Esophagus muscularis mucosa (tissue), 4 donors: ENCODE measurements at regions of chr6 and their contacts with region 1.

Region 1: GRCh38 chr6:132199343-132199742 is 201.9 kb downstream of the MOXD1 start:
- DNase-seq: no peak
- H3K4me3 ChIP-seq: no peak overlapping the region
- H3K27ac ChIP-seq: peak overlapping the region in 1 of 4 donors; percentile 4
- H3K4me1 ChIP-seq: peaks cover 3 to 33% (median 20%) of the 10 kb centered on the region in 4 donors
- H3K27me3 ChIP-seq: no peaks in the 10 kb centered on the region
- CTCF ChIP-seq: no peak
- EP300 ChIP-seq: no peak
- POLR2A ChIP-seq: no peak

Region 2: DNA sequence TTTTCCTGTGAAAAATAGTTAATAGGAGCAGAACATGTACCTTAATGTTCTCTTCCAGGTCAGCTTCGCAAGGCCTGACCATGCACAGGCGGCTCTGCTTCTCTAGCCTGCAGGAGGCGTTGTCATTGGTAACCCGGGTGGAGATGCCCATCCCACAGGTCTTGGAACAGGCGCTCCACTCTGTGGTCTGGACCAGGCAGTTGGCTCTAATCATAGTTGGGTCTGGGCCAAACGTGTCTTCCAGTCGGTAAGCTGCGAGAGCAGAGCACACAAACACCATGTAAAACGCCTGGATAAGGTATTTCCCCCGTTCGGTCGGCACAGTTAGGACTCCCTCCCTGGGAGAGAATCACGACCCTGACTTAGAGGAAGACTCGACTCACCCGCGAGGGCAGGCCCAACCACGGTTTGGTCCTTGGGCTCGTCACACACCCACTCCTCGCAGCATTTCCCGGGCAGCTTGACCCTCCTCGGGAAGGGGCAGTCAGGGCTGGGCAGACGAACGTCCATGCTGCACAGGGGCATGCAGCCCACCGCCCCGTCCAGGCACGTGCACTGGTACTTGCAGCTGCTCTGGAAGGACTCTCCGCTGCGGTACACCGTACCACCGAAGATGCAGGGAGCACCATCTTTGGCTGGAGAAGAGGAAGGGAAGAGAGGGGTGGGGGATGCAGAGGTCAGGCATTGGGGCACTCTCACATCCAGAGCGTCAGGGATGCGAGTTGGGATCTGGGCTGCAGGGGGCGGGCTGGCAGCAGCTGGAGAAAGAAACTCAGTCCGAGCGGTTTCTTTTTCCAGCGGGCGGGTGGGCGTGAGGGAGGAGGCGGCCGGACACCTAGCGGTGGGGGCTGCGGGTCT is 249.2 kb before region 1 on chr6:
- intact Hi-C with region 1: loop called (anchors 5 kb)
- DNase-seq: no peak
- H3K4me3 ChIP-seq: peak overlapping the region; percentile 86 to 94 (median 90)
- H3K27ac ChIP-seq: peak overlapping the region; percentile 96 to 97 (median 97)
- H3K4me1 ChIP-seq: peaks cover 16 to 49% (median 44%) of the 10 kb centered on the region in 4 donors
- H3K27me3 ChIP-seq: no peaks in the 10 kb centered on the region
- CTCF ChIP-seq: peak; percentile 51 to 67 (median 60)
- EP300 ChIP-seq: no peak
- POLR2A ChIP-seq: no peak